ENCODE measurements at regions of chr7 and their contacts with region 1.

Region 1: GRCh38 chr7:75762314-75762917 is 9.6 kb downstream of the CCL26 start:
- DNase-seq: no peak
- ATAC-seq: peak; percentile 79

Region 2: DNA sequence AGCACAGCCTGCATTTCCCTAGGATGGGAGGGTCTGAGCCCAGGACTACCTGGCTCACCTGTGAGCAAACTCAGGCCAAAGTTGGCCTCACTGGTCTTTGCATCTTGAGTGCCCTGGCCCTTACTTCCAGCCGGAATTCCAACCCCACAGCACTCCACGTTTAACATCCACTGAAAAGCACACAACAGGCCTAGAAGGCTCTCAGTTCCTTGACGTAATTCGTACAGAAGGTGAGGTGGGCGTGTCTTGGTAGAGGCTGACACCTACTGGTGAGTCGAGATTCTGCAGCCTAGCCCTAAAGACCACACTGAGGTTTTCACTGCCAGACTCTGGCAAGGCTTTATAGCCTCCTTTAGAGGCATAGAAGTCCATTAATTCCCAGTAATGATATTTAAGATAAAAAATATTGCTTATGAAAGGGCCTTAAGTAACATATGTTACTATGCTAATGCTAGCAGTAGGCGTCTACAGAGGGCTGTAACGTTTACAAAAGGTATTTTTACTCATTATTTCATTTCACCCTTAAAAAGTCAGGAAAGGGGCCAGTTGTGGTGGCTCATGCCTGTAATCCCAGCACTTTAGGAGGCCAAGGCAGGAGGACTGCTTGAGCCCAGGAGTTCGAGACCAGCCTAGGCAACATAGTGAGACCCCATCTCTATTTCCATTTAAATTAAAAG is 119.5 kb before region 1 on chr7:
- intact Hi-C with region 1: loop called (anchors 10 kb)
- DNase-seq: no peak
- ATAC-seq: no peak

Region 3: DNA sequence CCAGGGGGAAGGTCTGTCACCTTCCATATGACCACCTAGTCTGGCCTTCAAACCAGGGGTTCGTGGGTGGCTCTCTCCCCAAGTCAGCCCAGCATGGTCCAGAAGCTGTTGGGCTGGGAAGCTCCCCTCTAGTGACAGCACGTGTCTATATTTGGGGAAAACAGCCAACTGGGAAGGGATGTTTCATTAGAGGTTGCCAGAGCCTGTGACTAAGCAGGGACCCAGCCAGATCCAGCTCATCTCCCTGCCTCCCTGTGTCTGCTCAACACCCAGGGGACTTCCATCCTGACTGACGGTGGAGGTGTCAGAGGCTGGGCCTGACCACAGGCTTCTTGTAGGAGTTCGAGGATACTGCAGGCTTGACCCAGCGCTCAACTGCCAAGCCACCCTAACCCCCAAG is 274.9 kb after region 1 on chr7:
- intact Hi-C with region 1: no loop called
- DNase-seq: no peak
- ATAC-seq: peak; percentile 27

Measured in Right ventricle myocardium inferior (tissue), 1 donor.